Posterior vena cava (tissue), 2 donors: ENCODE measurements at regions of chr14 and their contacts with region 1.

Region 1: DNA sequence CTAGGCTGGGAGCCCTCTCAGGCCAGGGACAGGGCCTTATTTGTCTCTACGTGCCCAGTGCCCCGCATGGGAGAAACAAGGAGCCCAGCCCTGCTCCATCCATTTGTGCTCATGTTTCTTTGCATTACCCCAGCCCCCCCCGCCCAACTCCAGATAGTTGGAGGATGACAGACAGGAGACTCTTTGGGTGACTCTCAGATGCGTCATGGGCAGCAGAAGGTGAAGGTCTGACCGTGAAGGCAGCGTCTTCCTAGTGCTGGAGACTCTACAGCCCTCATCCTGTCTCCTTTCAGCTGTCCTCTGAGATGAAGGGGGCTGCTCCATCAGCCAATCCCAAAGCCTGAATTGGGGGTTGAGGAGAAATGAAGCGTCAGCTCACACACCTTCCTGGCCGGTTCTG is 283 bp upstream of the PSMB11 start:
- DNase-seq: no peak

Region 2: GRCh38 chr14:23009939-23010726 is 31.6 kb before region 1 on chr14 and contains the start of gene C14orf93:
- intact Hi-C with region 1: loop called in 1 of 2 experiments (anchors 1 kb)
- DNase-seq: peak; percentile 94
- total RNA-seq, gene C14orf93: 3.8 to 5.7 TPM

Region 3: GRCh38 chr14:23095196-23096108 is 53.7 kb after region 1 on chr14 and contains the start of gene C14orf119:
- intact Hi-C with region 1: no loop called
- DNase-seq: peak; percentile 100
- total RNA-seq, gene C14orf119: 35.2 to 38.7 TPM